B cell (primary cell): ENCODE measurements at regions of chr2 and their contacts with region 1.

Region 1: GRCh38 chr2:27050281-27050995 is 1.0 kb upstream of the AGBL5 start:
- DNase-seq: peak; percentile 98
- ATAC-seq: peak; percentile 60
- H3K4me3 ChIP-seq: peak overlapping the region; percentile 57 to 94 (median 81)
- H3K4me3 Mint-ChIP-seq: peak overlapping the region; percentile 95
- H3K27ac ChIP-seq: peak overlapping the region; percentile 72 to 80
- H3K27ac Mint-ChIP-seq: peak overlapping the region; percentile 100
- H3K4me1 ChIP-seq: peaks cover 4 to 15% of the 10 kb centered on the region in 2 donors
- H3K4me1 Mint-ChIP-seq: peaks cover 17% of the 10 kb centered on the region
- H3K27me3 ChIP-seq: no peaks in the 10 kb centered on the region
- H3K27me3 Mint-ChIP-seq: peaks cover 7% of the 10 kb centered on the region
- CTCF ChIP-seq: peak; percentile 50

Region 2: DNA sequence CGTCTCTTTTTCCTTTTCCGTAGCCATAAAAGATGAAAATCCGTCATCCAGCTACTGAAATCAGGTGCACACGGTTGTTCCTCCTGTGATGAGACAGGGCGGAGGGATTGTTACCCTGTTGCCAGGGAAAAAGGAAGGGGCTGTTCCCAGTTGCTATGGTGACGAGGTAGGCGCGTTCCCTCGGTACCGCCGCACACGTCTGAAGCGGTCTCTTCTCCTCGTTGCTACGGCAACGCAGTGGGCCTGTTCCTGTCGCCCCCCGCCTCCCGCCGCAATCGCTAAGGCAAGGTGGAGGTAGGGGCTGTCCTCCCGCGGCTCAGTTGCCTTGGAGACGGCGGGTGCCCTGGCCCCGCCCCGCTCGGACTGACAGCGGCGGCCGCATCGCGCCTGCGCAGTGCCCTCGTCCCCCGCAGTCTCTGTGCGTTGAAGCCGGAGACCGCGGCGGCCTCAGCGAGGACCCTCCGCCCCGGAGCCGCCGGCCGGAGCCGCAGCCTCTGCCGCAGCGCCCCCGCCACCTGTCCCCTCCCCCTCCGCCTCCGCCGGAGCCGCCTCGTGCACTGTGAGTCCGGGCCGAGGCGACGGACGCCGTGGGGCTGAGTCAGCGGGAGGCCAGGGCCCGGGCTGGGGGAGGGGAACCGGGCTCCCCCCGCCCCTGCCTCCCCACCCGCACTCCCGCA is 80.1 kb before region 1 on chr2 and contains the start of gene MAPRE3:
- CTCF ChIA-PET with region 1: interaction called, 3 read pairs
- POLR2A ChIA-PET with region 1: no interaction called
- intact Hi-C with region 1: loop called (anchors 1 kb)
- DNase-seq: peak; percentile 92
- ATAC-seq: peak; percentile 94
- H3K4me3 ChIP-seq: peak within 1 kb of the TSS; percentile 59 to 70 (median 62)
- H3K4me3 Mint-ChIP-seq: peak within 1 kb of the TSS; percentile 91
- H3K27ac ChIP-seq: peak within 1 kb of the TSS in 1 of 2 donors; percentile 47
- H3K27ac Mint-ChIP-seq: peak within 1 kb of the TSS; percentile 59
- H3K4me1 ChIP-seq: peaks cover 11 to 12% of the 10 kb centered on the region in 2 donors
- H3K4me1 Mint-ChIP-seq: peaks cover 19% of the 10 kb centered on the region
- H3K27me3 ChIP-seq: peaks cover 2 to 11% (median 5%) of the 10 kb centered on the region in 4 experiments
- H3K27me3 Mint-ChIP-seq: peaks cover 26% of the 10 kb centered on the region
- CTCF ChIP-seq: no peak
- total RNA-seq, gene MAPRE3: 5.4 and 7.1 TPM in 2 replicates

Region 3: GRCh38 chr2:27032495-27033252 is 17.8 kb before region 1 on chr2 and contains the start of gene TMEM214:
- CTCF ChIA-PET with region 1: interaction called, 21 read pairs
- POLR2A ChIA-PET with region 1: interaction called, 12 read pairs
- intact Hi-C with region 1: loop called (anchors 1 kb)
- DNase-seq: peak; percentile 81
- ATAC-seq: peak; percentile 98
- H3K4me3 ChIP-seq: peak within 1 kb of the TSS; percentile 64 to 93 (median 78)
- H3K4me3 Mint-ChIP-seq: peak within 1 kb of the TSS; percentile 95
- H3K27ac ChIP-seq: peak within 1 kb of the TSS; percentile 72 to 78
- H3K27ac Mint-ChIP-seq: peak within 1 kb of the TSS; percentile 93
- H3K4me1 ChIP-seq: peaks cover 16 to 23% of the 10 kb centered on the region in 2 donors
- H3K4me1 Mint-ChIP-seq: peaks cover 29% of the 10 kb centered on the region
- H3K27me3 ChIP-seq: no peaks in the 10 kb centered on the region
- H3K27me3 Mint-ChIP-seq: no peaks in the 10 kb centered on the region
- CTCF ChIP-seq: no peak
- total RNA-seq, gene TMEM214: 91.1 and 97.0 TPM in 2 replicates

Region 4: DNA sequence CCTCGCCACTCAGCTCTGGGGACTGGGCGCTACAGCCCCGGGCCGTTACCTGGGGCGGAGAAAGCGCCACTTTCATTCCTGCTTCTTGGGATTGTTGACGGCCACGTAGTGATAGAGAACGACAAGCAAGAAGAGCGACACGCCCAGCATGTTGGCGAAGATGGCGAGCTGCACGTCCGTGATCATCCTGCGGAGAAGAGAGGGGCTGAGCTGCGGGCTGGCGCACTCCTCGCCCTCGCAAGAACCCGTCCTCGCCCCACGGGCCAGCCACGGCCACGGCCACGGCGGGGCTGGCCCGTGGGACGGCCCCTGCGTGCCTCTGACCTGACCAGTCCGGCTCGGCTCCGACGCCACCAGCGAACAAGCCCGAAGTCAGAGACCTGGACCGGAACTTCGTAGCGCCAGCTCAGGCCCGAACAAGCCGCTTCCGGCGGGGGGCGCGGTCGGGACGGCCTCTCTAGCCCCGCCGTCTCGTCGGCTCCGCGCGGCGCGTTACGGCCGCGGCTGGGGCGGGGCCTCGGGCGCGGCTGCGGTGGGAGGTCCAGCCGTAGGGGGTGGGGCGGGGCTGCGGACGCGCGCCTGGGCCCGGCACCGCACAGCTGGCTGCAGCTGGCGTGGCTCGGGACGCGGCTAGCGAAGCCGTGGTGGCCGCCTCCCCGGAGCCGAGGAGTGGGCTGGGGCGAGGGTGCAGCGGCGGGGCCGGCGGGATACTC is 21.0 kb after region 1 on chr2 and contains the start of gene OST4:
- CTCF ChIA-PET with region 1: interaction called, 25 read pairs
- POLR2A ChIA-PET with region 1: interaction called, 48 read pairs
- intact Hi-C with region 1: loop called (anchors 1 kb)
- DNase-seq: peak; percentile 93
- ATAC-seq: peak; percentile 95
- H3K4me3 ChIP-seq: peak within 1 kb of the TSS; percentile 79 to 91 (median 88)
- H3K4me3 Mint-ChIP-seq: peak within 1 kb of the TSS; percentile 99
- H3K27ac ChIP-seq: peak within 1 kb of the TSS; percentile 64 to 87
- H3K27ac Mint-ChIP-seq: peak within 1 kb of the TSS; percentile 95
- H3K4me1 ChIP-seq: peaks cover 35 to 43% of the 10 kb centered on the region in 2 donors
- H3K4me1 Mint-ChIP-seq: peaks cover 62% of the 10 kb centered on the region
- H3K27me3 ChIP-seq: no peaks in the 10 kb centered on the region
- H3K27me3 Mint-ChIP-seq: no peaks in the 10 kb centered on the region
- CTCF ChIP-seq: no peak
- total RNA-seq, gene OST4: 195 and 199 TPM in 2 replicates

Region 5: GRCh38 chr2:27079233-27080139 is 29.0 kb after region 1 on chr2:
- CTCF ChIA-PET with region 1: interaction called, 27 read pairs
- POLR2A ChIA-PET with region 1: interaction called, 15 read pairs
- intact Hi-C with region 1: loop called (anchors 1 kb)
- DNase-seq: no peak
- ATAC-seq: no peak
- H3K4me3 ChIP-seq: no peak overlapping the region
- H3K4me3 Mint-ChIP-seq: no peak overlapping the region
- H3K27ac ChIP-seq: no peak overlapping the region
- H3K27ac Mint-ChIP-seq: no peak overlapping the region
- H3K4me1 ChIP-seq: peaks cover 27 to 37% of the 10 kb centered on the region in 2 donors
- H3K4me1 Mint-ChIP-seq: peaks cover 37% of the 10 kb centered on the region
- H3K27me3 ChIP-seq: peaks cover 0 to 11% (median 4%) of the 10 kb centered on the region in 4 experiments
- H3K27me3 Mint-ChIP-seq: no peaks in the 10 kb centered on the region
- CTCF ChIP-seq: no peak

Region 6: GRCh38 chr2:27177441-27178351 is 127.3 kb after region 1 on chr2:
- CTCF ChIA-PET with region 1: no interaction called
- POLR2A ChIA-PET with region 1: no interaction called
- intact Hi-C with region 1: no loop called
- DNase-seq: no peak
- ATAC-seq: no peak
- H3K4me3 ChIP-seq: no peak overlapping the region
- H3K4me3 Mint-ChIP-seq: no peak overlapping the region
- H3K27ac ChIP-seq: no peak overlapping the region
- H3K27ac Mint-ChIP-seq: no peak overlapping the region
- H3K4me1 ChIP-seq: no peaks in the 10 kb centered on the region
- H3K4me1 Mint-ChIP-seq: no peaks in the 10 kb centered on the region
- H3K27me3 ChIP-seq: peaks cover 0 to 14% (median 6%) of the 10 kb centered on the region in 4 experiments
- H3K27me3 Mint-ChIP-seq: peaks cover 35% of the 10 kb centered on the region
- CTCF ChIP-seq: no peak

Region 7: DNA sequence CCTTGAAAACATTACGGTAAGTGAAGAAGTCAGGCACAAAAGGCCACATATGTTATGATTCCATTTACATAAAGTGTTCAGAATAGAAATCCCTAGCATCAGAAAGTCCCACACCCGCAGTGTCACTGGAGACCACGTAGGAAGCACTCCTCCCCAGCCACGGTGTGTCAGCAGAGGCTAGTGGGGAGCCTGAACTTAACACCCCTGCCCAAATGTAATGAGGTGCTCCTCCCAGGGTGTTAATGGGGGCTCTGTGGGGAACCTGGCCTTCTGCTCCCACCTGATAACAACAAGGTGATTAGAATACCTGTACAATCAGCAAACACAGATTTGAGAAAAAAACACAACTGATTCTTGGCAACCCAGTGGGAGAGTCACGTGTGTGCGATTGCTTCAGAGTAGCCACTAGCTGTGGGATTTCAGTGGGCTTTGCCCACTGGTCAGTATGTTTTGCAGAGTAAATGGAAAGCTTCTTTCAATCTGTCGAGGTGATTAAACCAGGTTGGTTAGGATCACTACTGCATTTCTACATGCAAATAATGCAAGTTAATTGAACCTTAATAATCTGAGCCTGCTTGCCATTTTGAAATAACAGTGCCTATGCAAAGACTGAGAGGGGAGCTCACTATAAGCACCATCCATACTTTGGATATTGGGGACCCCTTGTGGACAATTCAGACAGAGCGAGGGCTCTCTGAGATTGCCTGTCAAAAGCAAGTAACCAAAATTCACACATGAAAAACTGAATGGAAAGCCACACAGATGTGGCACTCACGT is 140.8 kb after region 1 on chr2:
- CTCF ChIA-PET with region 1: interaction called, 4 read pairs
- POLR2A ChIA-PET with region 1: no interaction called
- intact Hi-C with region 1: loop called (anchors 1 kb)
- DNase-seq: peak; percentile 74
- ATAC-seq: peak; percentile 73
- H3K4me3 ChIP-seq: no peak overlapping the region
- H3K4me3 Mint-ChIP-seq: no peak overlapping the region
- H3K27ac ChIP-seq: no peak overlapping the region
- H3K27ac Mint-ChIP-seq: no peak overlapping the region
- H3K4me1 ChIP-seq: no peaks in the 10 kb centered on the region
- H3K4me1 Mint-ChIP-seq: no peaks in the 10 kb centered on the region
- H3K27me3 ChIP-seq: no peaks in the 10 kb centered on the region
- H3K27me3 Mint-ChIP-seq: no peaks in the 10 kb centered on the region
- CTCF ChIP-seq: peak; percentile 74

Region 8: GRCh38 chr2:27225526-27225925 is 175.1 kb after region 1 on chr2:
- CTCF ChIA-PET with region 1: no interaction called
- POLR2A ChIA-PET with region 1: no interaction called
- intact Hi-C with region 1: no loop called
- DNase-seq: no peak
- ATAC-seq: no peak
- H3K4me3 ChIP-seq: no peak overlapping the region
- H3K4me3 Mint-ChIP-seq: no peak overlapping the region
- H3K27ac ChIP-seq: no peak overlapping the region
- H3K27ac Mint-ChIP-seq: no peak overlapping the region
- H3K4me1 ChIP-seq: no peaks in the 10 kb centered on the region
- H3K4me1 Mint-ChIP-seq: no peaks in the 10 kb centered on the region
- H3K27me3 ChIP-seq: no peaks in the 10 kb centered on the region
- H3K27me3 Mint-ChIP-seq: no peaks in the 10 kb centered on the region
- CTCF ChIP-seq: no peak